Dorsolateral prefrontal cortex (tissue), 120 donors: ENCODE measurements at regions of chr22 and their contacts with region 1.

Region 1: DNA sequence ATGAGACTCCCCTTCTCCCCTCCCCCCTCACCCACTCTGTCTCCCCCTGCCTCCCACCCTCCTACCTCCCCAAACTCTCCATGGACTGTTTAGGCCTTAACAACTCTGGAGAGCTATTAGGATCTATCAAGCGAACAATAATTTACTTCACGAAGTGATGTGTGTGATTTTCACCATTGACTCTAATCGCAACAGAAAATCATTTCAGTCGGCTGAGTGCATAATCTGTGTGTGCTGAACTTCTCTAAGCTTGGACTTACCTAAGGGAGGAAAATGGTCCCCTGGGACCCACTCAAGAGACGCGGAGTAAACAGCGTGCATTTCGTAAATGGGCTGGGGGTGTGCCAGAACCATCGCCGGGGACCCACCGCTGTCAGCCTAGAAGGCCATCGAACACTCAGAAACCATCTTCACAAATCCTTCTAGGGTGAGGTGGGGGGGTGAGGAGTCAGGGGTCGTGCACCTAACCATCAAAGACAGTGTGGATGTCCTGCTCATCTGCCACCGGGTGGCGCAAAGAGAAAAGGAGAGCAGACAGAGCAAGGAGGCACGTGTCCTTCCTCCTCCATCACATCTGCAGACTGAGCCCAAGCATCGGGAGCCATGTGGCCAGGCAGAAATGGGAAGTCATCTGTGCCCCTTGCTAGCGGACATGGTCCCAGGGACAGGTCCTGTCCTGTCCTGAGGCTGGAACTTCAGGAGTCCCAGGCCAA is 62.1 kb upstream of the NUP50 start:
- DNase-seq: peak in 7 of 10 donors; percentile 11 to 70 (median 52)
- H3K4me3 ChIP-seq: no peak overlapping the region
- H3K27ac ChIP-seq: no peak overlapping the region
- H3K27me3 ChIP-seq: peaks cover 0 to 21% (median 2%) of the 10 kb centered on the region in 45 donors
- CTCF ChIP-seq: peak in 52 of 56 donors; percentile 22 to 77 (median 54)

Region 2: DNA sequence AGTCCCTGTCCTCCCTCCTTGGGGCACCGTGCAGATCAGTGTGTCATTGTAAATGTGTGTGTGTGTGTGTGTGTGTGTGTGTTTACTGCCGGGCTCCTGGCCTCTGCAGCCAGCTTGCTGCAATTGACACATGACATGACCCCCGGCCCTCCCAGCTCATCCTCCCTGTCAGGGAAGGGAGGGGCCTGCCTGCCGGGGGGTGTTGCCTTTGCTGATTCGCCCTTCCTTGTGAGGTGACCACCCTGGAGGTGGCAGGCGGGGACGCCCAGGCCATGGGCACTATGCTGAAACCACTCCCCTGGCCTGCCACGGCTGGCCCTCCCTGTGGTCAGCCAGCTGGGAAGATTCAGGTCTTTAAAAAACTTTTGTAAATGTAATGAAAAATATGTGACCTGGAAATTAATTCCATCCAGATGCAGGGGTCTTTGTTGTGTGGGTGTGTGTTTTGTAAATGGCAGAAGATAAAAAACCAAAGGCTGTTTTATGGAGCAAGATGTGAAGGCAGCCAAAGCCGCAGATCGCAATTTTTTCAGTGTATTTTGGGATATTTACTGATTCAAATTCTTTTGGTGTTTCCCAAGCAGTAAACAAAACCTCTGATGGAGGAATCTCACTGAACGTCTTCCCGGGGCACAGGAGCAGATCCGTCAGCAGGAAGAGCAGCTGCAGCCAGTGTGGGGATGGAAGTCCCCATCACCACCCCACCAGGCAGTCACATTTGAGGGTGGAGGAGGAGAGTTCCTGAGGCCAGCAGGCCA is 812.1 kb before region 1 on chr22:
- intact Hi-C with region 1: no loop called
- DNase-seq: no peak
- H3K4me3 ChIP-seq: no peak overlapping the region
- H3K27ac ChIP-seq: peak overlapping the region in 1 of 59 donors; percentile 20
- H3K27me3 ChIP-seq: peaks cover 0 to 6% (median 0%) of the 10 kb centered on the region in 45 donors
- CTCF ChIP-seq: no peak

Region 3: GRCh38 chr22:44648818-44649565 is 452.7 kb before region 1 on chr22:
- intact Hi-C with region 1: no loop called
- DNase-seq: peak in 4 of 10 donors; percentile 15 to 36 (median 32)
- H3K4me3 ChIP-seq: no peak overlapping the region
- H3K27ac ChIP-seq: no peak overlapping the region
- H3K27me3 ChIP-seq: peaks cover 0 to 4% (median 0%) of the 10 kb centered on the region in 45 donors
- CTCF ChIP-seq: no peak

Region 4: DNA sequence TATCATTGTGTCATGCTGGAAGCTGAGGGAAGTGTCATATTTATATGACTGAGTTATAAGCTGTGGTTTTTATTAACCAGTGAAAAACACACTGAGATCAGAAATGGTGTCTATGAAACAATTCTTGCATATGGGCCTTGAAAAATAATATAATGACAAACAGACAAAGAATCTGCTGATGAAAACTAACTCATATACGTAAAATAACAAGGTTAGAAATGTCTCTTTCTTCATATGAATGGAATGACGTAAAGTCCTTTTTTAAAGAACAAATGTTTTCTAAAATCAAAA is 43.1 kb before region 1 on chr22:
- intact Hi-C with region 1: no loop called
- DNase-seq: no peak
- H3K4me3 ChIP-seq: no peak overlapping the region
- H3K27ac ChIP-seq: no peak overlapping the region
- H3K27me3 ChIP-seq: peaks cover 0 to 4% (median 0%) of the 10 kb centered on the region in 45 donors
- CTCF ChIP-seq: no peak

Region 5: DNA sequence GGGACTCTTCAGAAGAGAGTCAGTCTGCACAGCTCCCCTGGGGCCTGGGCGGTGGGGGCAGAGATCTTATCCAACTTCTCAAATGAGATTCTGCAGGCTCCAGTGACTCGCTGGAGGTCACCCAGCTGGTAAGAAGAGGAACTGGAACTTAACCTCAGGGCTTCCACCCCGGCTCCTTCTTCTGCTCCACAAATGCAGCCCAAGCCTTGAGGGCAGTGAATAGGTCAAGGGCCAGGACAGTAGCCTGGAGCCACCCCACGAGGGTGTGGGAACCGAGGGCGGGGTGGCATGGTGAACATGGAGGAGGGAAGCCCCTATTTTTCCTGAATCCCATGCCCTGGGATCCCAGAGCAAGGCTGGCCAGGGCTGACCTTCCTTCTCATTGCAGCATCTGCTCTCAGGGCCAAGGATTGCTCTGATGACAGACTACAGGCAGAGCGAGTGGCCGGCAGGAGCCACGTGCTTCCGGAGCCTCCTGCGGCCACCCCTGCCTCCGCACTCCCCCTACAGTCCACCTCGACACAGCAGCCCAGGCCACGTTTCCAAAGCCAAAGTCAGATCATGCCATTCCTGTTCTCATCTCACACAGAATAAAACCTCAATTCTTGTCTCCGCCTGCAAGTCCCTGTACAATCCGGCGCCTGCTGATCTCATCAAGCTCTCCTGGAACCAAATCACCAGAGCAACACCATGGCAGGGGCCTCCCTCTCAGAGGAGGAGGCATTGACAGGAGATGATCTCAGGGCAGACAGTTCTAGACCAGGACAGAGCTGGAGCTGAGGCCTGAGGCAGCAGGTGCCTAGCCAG is 162.0 kb after region 1 on chr22:
- intact Hi-C with region 1: loop called (anchors 5 kb)
- DNase-seq: peak in 9 of 10 donors; percentile 50 to 80 (median 63)
- H3K4me3 ChIP-seq: no peak overlapping the region
- H3K27ac ChIP-seq: peak overlapping the region in 40 of 59 donors; percentile 1 to 74 (median 52)
- H3K27me3 ChIP-seq: no peaks in the 10 kb centered on the region
- CTCF ChIP-seq: peak; percentile 42 to 91 (median 76)

Region 6: GRCh38 chr22:45429981-45430775 is 328.5 kb after region 1 on chr22:
- intact Hi-C with region 1: loop called in 1 of 2 experiments (anchors 5 kb)
- DNase-seq: no peak
- H3K4me3 ChIP-seq: no peak overlapping the region
- H3K27ac ChIP-seq: no peak overlapping the region
- H3K27me3 ChIP-seq: no peaks in the 10 kb centered on the region
- CTCF ChIP-seq: no peak

Region 7: GRCh38 chr22:45516923-45517675 is 415.4 kb after region 1 on chr22:
- intact Hi-C with region 1: no loop called
- DNase-seq: no peak
- H3K4me3 ChIP-seq: no peak overlapping the region
- H3K27ac ChIP-seq: peak overlapping the region in 1 of 59 donors; percentile 35
- H3K27me3 ChIP-seq: peaks cover 0 to 11% (median 0%) of the 10 kb centered on the region in 45 donors
- CTCF ChIP-seq: no peak

Region 8: DNA sequence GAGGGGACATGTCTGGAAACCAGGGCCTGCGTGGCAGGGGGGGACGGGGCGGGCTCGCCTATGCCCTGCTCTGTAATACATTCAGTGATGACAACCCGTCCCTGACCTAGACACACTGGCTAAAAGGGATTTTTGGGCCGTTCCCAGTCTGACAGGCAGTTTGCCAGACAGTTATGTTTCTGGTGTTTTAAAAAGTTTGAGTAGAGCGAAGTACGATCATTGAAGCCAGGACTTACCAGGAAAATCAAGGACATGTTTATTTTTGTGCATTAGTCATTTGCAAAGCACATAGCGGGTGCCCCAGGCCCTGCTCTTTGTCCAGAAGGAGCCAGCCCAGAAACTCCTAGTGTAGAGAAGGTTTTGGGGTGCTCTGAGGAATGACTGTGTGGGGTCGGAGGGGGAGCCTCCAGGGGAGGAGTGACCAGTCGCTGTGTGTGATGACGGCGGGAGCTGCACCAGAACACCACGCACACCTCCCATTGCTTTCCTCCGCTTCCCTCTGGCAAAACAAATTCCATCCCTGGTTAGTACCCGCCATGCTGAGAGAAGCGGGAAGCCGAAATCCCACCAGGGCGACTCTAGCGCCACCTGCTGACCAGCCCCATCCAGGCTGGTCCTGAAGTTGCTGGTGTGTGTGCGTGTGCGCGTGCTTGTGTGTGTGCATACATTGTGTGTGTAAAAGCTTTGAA is 451.8 kb after region 1 on chr22:
- intact Hi-C with region 1: loop called in 1 of 2 experiments (anchors 10 kb)
- DNase-seq: peak; percentile 65 to 85 (median 73)
- H3K4me3 ChIP-seq: peak overlapping the region in 4 of 59 donors; percentile 2 to 16 (median 6)
- H3K27ac ChIP-seq: peak overlapping the region in 39 of 59 donors; percentile 6 to 84 (median 61)
- H3K27me3 ChIP-seq: peaks cover 0 to 5% (median 0%) of the 10 kb centered on the region in 45 donors
- CTCF ChIP-seq: peak; percentile 69 to 97 (median 92)